ENCODE measurements at regions of chr3 and their contacts with region 1.

Region 1: DNA sequence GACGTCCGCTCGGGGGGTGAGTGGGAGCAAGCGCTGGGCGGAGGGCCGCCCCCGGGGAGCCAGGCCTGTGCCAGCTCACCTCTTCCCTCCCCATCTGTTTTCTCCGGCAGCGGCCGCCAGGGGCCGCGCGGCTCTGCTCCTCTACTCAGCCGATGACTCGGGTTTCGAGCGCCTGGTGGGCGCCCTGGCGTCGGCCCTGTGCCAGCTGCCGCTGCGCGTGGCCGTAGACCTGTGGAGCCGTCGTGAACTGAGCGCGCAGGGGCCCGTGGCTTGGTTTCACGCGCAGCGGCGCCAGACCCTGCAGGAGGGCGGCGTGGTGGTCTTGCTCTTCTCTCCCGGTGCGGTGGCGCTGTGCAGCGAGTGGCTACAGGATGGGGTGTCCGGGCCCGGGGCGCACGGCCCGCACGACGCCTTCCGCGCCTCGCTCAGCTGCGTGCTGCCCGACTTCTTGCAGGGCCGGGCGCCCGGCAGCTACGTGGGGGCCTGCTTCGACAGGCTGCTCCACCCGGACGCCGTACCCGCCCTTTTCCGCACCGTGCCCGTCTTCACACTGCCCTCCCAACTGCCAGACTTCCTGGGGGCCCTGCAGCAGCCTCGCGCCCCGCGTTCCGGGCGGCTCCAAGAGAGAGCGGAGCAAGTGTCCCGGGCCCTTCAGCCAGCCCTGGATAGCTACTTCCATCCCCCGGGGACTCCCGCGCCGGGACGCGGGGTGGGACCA is 632 bp upstream of the CRELD1 start:
- DNase-seq: peak; percentile 84
- H3K4me3 ChIP-seq: peak overlapping the region; percentile 19 to 76 (median 55)
- H3K27ac ChIP-seq: peak overlapping the region; percentile 85
- H3K4me1 ChIP-seq: peaks cover 16% of the 10 kb centered on the region
- H3K27me3 ChIP-seq: no peaks in the 10 kb centered on the region
- CTCF ChIP-seq: peak; percentile 75 to 91
- POLR2A ChIP-seq: no peak

Region 2: GRCh38 chr3:9792405-9793160 is 140.4 kb before region 1 on chr3 and contains the starts of genes ARPC4 and TADA3:
- CTCF ChIA-PET with region 1: interaction called, 7 read pairs
- POLR2A ChIA-PET with region 1: interaction called, 3 read pairs
- dilution Hi-C with region 1: no loop called
- intact Hi-C with region 1: loop called (anchors 1 kb)
- DNase-seq: peak; percentile 95
- H3K4me3 ChIP-seq: peak within 1 kb of the TSS; percentile 68 to 88 (median 88)
- H3K27ac ChIP-seq: peak within 1 kb of the TSS; percentile 93
- H3K4me1 ChIP-seq: peaks cover 13% of the 10 kb centered on the region
- H3K27me3 ChIP-seq: no peaks in the 10 kb centered on the region
- CTCF ChIP-seq: peak in 1 of 2 donors; percentile 12
- POLR2A ChIP-seq: peak; percentile 88
- total RNA-seq, gene ARPC4: 197 TPM in 2 replicates
- total RNA-seq, gene TADA3: 31.0 and 31.3 TPM in 2 replicates

Region 3: DNA sequence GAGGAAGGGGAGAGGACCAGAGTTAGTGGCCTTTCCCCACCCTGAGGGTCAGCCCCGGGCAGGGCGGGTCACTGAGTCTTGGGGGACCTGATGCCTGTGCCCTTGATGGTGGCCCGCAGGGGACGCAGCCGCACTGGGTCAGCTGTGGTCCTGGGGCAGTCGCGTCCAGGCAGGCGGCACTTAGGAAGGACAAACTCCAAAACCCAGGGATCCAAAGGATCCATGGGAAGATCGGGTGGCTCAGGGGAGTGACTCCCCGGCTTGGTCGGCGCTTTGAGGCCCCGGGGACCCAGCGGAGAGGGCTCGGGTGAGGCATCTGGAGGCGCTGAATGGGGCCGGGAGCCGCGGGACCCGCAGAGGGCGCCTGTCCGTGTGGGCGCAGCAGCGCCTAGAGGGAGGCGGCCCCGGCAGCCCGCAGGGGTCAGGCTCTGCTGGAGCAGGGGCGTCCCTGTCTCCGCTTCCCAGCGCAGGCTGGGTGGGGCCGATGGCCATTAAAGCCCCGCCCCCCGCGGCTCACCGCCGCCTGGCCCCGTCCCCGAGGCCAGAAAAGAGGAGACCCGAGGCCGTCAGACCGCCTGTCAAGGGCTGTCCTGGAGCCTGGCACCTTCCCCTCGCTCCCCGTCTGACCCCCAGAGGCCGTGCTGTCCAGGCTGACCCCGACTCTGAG is 70.5 kb before region 1 on chr3:
- CTCF ChIA-PET with region 1: interaction called, 3 read pairs
- POLR2A ChIA-PET with region 1: no interaction called
- dilution Hi-C with region 1: no loop called
- intact Hi-C with region 1: loop called (anchors 1 kb)
- DNase-seq: peak; percentile 29
- H3K4me3 ChIP-seq: peak overlapping the region in 1 of 3 experiments; percentile 27
- H3K27ac ChIP-seq: no peak overlapping the region
- H3K4me1 ChIP-seq: no peaks in the 10 kb centered on the region
- H3K27me3 ChIP-seq: no peaks in the 10 kb centered on the region
- CTCF ChIP-seq: peak; percentile 30 to 62
- POLR2A ChIP-seq: no peak

Region 4: GRCh38 chr3:9915254-9916141 is 17.5 kb before region 1 on chr3:
- CTCF ChIA-PET with region 1: interaction called, 11 read pairs
- POLR2A ChIA-PET with region 1: interaction called, 3 read pairs
- dilution Hi-C with region 1: no loop called
- intact Hi-C with region 1: loop called (anchors 1 kb)
- DNase-seq: peak; percentile 50
- H3K4me3 ChIP-seq: peak overlapping the region in 2 of 3 experiments; percentile 29 to 39
- H3K27ac ChIP-seq: no peak overlapping the region
- H3K4me1 ChIP-seq: peaks cover 13% of the 10 kb centered on the region
- H3K27me3 ChIP-seq: no peaks in the 10 kb centered on the region
- CTCF ChIP-seq: peak; percentile 32 to 57
- POLR2A ChIP-seq: peak; percentile 29

Region 5: GRCh38 chr3:10322352-10322710 is 389.3 kb after region 1 on chr3:
- CTCF ChIA-PET with region 1: interaction called, 14 read pairs
- POLR2A ChIA-PET with region 1: no interaction called
- dilution Hi-C with region 1: no loop called
- intact Hi-C with region 1: loop called (anchors 1 kb)
- DNase-seq: no peak
- H3K4me3 ChIP-seq: no peak overlapping the region
- H3K27ac ChIP-seq: no peak overlapping the region
- H3K4me1 ChIP-seq: peaks cover 25% of the 10 kb centered on the region
- H3K27me3 ChIP-seq: peaks cover 12 to 13% of the 10 kb centered on the region in 2 experiments
- CTCF ChIP-seq: peak; percentile 37 to 45
- POLR2A ChIP-seq: no peak

Measured in endothelial cell of umbilical vein (primary cell).